Ascending aorta (tissue), 2 donors: ENCODE measurements at regions of chr10 and their contacts with region 1.

Region 1: DNA sequence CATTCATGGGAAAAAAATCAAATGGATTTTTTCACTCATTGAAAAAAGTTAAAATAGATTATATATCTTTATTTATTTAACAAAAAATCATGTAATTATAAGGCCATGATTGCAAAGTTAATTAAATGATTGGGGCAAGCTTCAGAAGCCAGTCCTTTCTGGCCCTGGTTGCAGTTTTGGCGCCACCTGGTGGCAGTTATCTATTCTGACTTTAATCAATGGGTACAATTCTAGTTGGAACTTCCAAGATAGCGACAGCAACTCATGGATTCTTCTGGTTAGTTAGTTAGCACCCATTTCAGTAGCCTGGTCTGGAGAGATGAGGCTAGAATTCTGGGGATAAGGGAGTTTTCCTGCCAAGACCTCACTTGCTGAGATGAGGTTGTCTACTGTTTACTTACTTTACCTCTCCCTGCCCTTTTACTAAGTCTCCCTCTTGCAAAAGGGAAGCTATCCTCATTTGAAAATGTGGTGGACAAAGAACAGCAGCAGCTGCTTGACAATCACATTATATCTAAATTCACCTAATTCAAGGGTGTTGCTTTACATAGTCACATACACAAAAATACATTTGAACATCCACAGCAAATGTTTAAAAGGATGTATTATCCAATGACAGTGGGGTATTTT is 42.3 kb downstream of the NOC3L start:
- DNase-seq: peak in 1 of 2 donors; percentile 76
- H3K4me3 ChIP-seq: no peak overlapping the region
- H3K27ac ChIP-seq: no peak overlapping the region
- H3K4me1 ChIP-seq: peaks cover 0 to 7% of the 10 kb centered on the region in 2 donors
- H3K27me3 ChIP-seq: no peaks in the 10 kb centered on the region
- CTCF ChIP-seq: peak; percentile 58 to 90 (median 86)

Region 2: DNA sequence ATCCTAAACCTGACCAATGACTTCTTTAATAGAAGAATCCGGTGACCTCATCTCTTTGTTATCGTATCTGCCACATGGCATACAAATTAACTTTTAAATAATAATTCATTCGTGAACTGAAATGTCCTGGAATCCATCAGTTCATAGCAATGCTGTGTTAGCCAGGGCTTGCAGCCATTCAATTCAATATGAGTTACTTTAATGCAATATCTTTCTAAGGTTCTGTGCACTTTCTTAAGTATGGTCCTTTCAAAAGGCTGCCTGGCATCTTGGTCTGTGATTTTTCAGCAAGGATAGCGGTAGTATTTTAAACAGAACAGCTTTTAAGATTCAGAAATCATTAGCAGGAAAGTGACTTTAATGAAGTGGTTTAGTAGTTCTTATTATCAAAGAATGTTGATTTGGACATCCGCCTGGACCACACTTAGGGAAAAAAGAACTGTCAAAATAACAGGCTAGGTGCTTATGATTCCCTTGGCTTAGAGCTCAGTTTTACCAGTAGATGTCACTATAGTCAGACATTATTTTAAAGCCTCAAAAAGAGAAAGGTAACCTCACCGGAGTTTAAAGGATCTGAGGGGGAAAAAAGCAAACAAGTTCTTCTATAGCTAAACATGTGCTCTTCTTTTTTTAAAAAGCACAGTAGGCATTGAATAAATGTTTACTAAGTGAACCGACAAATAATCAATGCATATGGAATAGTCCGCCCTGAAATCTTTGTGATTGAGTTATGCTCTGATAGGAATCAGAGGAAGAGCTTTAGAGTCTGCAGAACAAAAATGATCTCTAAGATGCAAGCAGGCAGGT is 403.9 kb before region 1 on chr10:
- intact Hi-C with region 1: loop called (anchors 2 kb)
- DNase-seq: no peak
- H3K4me3 ChIP-seq: peak overlapping the region; percentile 11 to 18
- H3K27ac ChIP-seq: no peak overlapping the region
- H3K4me1 ChIP-seq: no peaks in the 10 kb centered on the region
- H3K27me3 ChIP-seq: no peaks in the 10 kb centered on the region
- CTCF ChIP-seq: peak; percentile 20 to 59 (median 53)

Region 3: GRCh38 chr10:94076321-94076841 is 244.0 kb before region 1 on chr10:
- intact Hi-C with region 1: loop called (anchors 1 kb)
- DNase-seq: no peak
- H3K4me3 ChIP-seq: peak overlapping the region in 1 of 2 donors; percentile 26
- H3K27ac ChIP-seq: no peak overlapping the region
- H3K4me1 ChIP-seq: peaks cover 0 to 4% of the 10 kb centered on the region in 2 donors
- H3K27me3 ChIP-seq: no peaks in the 10 kb centered on the region
- CTCF ChIP-seq: peak; percentile 49 to 74 (median 49)

Region 4: GRCh38 chr10:94251568-94251967 is 68.8 kb before region 1 on chr10:
- intact Hi-C with region 1: no loop called
- DNase-seq: no peak
- H3K4me3 ChIP-seq: no peak overlapping the region
- H3K27ac ChIP-seq: no peak overlapping the region
- H3K4me1 ChIP-seq: no peaks in the 10 kb centered on the region
- H3K27me3 ChIP-seq: no peaks in the 10 kb centered on the region
- CTCF ChIP-seq: no peak

Region 5: GRCh38 chr10:94274142-94274787 is 46.1 kb before region 1 on chr10:
- intact Hi-C with region 1: no loop called
- DNase-seq: no peak
- H3K4me3 ChIP-seq: no peak overlapping the region
- H3K27ac ChIP-seq: peak overlapping the region; percentile 17 to 29
- H3K4me1 ChIP-seq: peaks cover 0 to 15% of the 10 kb centered on the region in 2 donors
- H3K27me3 ChIP-seq: no peaks in the 10 kb centered on the region
- CTCF ChIP-seq: no peak